A673 (cell line): ENCODE measurements at regions of chr5 and their contacts with region 1.

Region 1: DNA sequence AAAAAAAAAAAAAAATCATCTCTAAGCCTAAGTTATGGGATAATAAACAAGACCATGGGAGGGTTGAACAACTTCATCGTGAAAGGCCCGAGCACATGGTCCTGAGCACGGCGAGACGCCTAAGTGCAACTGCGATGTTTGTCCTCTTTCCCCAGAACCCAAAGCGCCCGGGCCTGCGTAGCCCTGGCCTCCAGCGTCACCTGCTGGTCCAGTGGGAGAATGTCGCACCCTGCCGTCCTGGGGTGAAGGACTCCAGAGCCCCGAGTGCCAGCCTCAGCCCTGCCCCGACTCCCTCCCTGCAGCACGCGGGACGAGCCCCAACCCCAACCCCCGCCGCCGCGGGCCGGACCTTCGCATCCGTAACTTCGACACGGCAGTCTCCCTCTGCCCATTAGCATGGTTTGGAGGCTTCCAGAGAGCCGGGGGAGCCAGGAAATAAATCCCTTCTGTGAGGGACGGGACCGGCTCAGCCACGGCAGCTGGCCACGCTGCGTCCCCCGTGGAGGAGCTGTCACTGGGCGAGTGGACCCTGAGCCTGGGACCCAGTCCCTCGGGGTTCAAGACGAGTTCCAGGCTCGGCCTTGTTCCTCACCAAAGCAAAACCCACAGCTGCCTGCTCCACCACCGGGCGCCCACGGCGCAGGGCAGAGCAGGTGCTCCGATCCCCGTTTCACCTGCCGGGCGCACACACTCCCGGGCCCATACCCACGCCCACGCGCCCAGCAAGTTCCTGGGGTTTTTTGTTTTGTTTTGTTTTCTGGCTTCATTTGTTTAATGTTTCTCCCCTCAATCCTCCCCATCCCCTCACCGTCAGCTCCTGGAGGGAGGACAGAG is 132.5 kb upstream of the HAND1 start:
- DNase-seq: peak; percentile 85
- H3K4me3 ChIP-seq: peak overlapping the region; percentile 22
- H3K27ac ChIP-seq: no peak overlapping the region
- H3K4me1 ChIP-seq: peaks cover 5% of the 10 kb centered on the region
- H3K27me3 ChIP-seq: peaks cover 19% of the 10 kb centered on the region
- CTCF ChIP-seq: peak; percentile 84

Region 2: GRCh38 chr5:154421868-154422267 is 188.7 kb before region 1 on chr5:
- CTCF ChIA-PET with region 1: no interaction called
- POLR2A ChIA-PET with region 1: no interaction called
- intact Hi-C with region 1: loop called (anchors 2 kb)
- DNase-seq: peak; percentile 37
- H3K4me3 ChIP-seq: no peak overlapping the region
- H3K27ac ChIP-seq: no peak overlapping the region
- H3K4me1 ChIP-seq: peaks cover 21% of the 10 kb centered on the region
- H3K27me3 ChIP-seq: no peaks in the 10 kb centered on the region
- CTCF ChIP-seq: peak; percentile 59

Region 3: GRCh38 chr5:154467655-154468354 is 142.7 kb before region 1 on chr5:
- CTCF ChIA-PET with region 1: no interaction called
- POLR2A ChIA-PET with region 1: no interaction called
- intact Hi-C with region 1: loop called (anchors 1 kb)
- DNase-seq: peak; percentile 70
- H3K4me3 ChIP-seq: no peak overlapping the region
- H3K27ac ChIP-seq: no peak overlapping the region
- H3K4me1 ChIP-seq: no peaks in the 10 kb centered on the region
- H3K27me3 ChIP-seq: peaks cover 30% of the 10 kb centered on the region
- CTCF ChIP-seq: peak; percentile 87

Region 4: GRCh38 chr5:154475591-154476353 is 134.8 kb before region 1 on chr5:
- CTCF ChIA-PET with region 1: no interaction called
- POLR2A ChIA-PET with region 1: no interaction called
- intact Hi-C with region 1: loop called (anchors 2 kb)
- DNase-seq: no peak
- H3K4me3 ChIP-seq: no peak overlapping the region
- H3K27ac ChIP-seq: no peak overlapping the region
- H3K4me1 ChIP-seq: peaks cover 4% of the 10 kb centered on the region
- H3K27me3 ChIP-seq: peaks cover 100% of the 10 kb centered on the region
- CTCF ChIP-seq: no peak

Region 5: DNA sequence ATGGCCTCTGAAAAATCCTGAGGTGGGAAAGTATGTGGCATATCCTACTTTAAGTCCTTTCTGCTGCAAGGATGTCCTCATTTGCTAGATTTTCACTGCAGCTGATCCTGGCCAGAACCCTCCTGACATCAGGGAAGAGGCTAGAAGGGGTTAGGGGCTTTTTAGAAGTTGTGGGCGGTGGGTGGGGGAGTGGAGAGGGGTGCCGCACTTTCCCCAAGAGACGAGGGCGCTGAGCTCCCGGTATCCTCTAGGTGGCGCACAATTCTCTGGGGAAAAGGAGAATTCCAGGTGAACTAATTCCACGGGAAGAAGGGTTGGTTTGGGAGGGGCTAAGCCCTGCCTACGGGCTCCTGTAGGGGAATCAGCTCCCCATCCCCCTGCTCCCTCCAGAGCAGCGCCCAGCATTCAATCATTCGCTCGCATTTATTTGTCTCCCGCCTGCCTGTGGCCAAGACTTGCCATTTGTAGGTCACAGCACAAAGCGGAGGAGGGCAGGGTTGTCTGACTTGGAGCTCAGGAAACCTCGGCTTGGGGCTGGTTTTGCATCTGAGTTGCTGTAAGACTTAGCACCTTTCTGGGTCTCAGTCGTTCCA is 89.6 kb before region 1 on chr5:
- CTCF ChIA-PET with region 1: no interaction called
- POLR2A ChIA-PET with region 1: no interaction called
- intact Hi-C with region 1: loop called (anchors 1 kb)
- DNase-seq: peak; percentile 25
- H3K4me3 ChIP-seq: no peak overlapping the region
- H3K27ac ChIP-seq: no peak overlapping the region
- H3K4me1 ChIP-seq: no peaks in the 10 kb centered on the region
- H3K27me3 ChIP-seq: no peaks in the 10 kb centered on the region
- CTCF ChIP-seq: peak; percentile 78

Region 6: GRCh38 chr5:154663424-154663823 is 52.9 kb after region 1 on chr5:
- CTCF ChIA-PET with region 1: no interaction called
- POLR2A ChIA-PET with region 1: no interaction called
- intact Hi-C with region 1: no loop called
- DNase-seq: no peak
- H3K4me3 ChIP-seq: no peak overlapping the region
- H3K27ac ChIP-seq: no peak overlapping the region
- H3K4me1 ChIP-seq: no peaks in the 10 kb centered on the region
- H3K27me3 ChIP-seq: no peaks in the 10 kb centered on the region
- CTCF ChIP-seq: no peak

Region 7: DNA sequence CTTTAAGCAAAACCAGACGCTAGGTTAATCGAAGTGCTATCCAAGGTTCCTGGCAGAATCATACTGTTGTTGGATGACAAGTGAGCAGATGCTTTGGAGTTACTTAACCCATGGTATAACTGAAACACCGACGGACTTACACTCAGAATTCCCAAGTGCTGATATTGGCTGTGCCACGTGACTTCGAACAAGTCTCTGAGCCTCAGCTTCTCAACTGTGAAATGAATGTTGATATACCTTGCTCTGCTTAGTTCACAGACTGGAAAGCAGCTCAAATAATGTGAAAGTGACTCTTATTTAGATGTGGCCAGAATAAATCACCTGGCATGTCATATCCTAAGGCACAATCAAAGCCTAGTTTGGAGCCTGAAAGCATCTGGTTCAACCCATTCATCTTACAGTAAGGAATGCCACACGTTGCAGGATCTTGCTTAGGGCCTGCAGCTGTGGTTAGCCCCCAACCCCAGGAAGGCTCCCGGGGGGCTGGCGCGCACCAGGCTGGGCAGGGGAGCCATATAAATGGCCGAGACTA is 326.7 kb after region 1 on chr5:
- CTCF ChIA-PET with region 1: no interaction called
- POLR2A ChIA-PET with region 1: no interaction called
- intact Hi-C with region 1: no loop called
- DNase-seq: no peak
- H3K4me3 ChIP-seq: peak overlapping the region; percentile 98
- H3K27ac ChIP-seq: peak overlapping the region; percentile 88
- H3K4me1 ChIP-seq: peaks cover 10% of the 10 kb centered on the region
- H3K27me3 ChIP-seq: no peaks in the 10 kb centered on the region
- CTCF ChIP-seq: no peak